ENCODE measurements at regions of chr3 and their contacts with region 1.

Region 1: GRCh38 chr3:39288300-39288808 is 8.5 kb upstream of the CX3CR1 start:
- DNase-seq: peak; percentile 90
- H3K4me3 Mint-ChIP-seq: no peak overlapping the region
- H3K27ac Mint-ChIP-seq: peak overlapping the region; percentile 22
- H3K4me1 Mint-ChIP-seq: peaks cover 61% of the 10 kb centered on the region
- H3K27me3 Mint-ChIP-seq: no peaks in the 10 kb centered on the region

Region 2: DNA sequence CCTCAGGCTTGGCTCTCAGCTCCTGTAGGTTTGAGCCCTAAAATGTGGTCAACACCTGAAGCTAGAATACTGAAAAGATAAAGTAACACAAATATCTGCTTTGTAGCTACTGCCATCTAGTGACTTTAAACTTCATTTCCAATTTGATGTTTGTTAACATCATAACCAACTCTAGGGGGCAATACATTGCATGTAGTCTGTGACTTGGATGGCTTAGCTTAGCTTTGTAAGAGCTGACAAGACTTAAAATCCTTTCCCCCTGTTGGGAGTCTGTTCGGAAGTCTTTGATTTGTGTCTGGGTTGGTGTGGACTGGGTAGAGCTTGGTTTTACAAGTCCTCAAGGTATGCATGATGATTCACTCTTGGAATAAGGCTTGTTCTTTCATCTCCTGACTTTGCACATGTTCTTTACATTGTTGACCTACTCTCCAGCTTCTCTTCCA is 288.3 kb before region 1 on chr3:
- CTCF ChIA-PET with region 1: interaction called, 19 read pairs
- POLR2A ChIA-PET with region 1: interaction called, 3 read pairs
- DNase-seq: no peak
- H3K4me3 Mint-ChIP-seq: no peak overlapping the region
- H3K27ac Mint-ChIP-seq: no peak overlapping the region
- H3K4me1 Mint-ChIP-seq: no peaks in the 10 kb centered on the region
- H3K27me3 Mint-ChIP-seq: peaks cover 13% of the 10 kb centered on the region

Region 3: DNA sequence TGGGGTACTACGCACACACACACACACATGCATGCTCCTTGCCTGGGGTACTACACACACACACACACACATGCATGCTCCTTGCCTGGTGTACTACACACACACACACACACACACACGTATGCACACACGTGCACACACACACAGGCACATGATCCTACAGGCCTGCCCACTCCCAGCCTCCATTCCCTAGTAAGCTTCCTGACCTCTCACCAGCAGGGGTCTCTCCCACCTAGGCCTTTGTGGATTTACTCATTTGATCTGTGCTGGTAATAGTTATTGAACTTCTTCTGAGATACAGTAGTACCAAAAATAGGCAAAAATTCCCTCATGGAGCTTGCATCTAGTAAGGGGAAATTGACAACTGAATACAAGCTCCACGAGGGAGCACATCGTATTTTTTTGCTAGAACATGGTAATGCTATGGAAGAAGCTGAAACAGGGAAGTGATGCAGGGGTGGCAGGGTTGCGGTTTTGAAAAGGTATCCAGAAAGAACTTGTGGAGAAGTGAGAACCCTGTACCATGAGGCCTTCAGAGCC is 161.8 kb before region 1 on chr3:
- CTCF ChIA-PET with region 1: interaction called, 96 read pairs
- POLR2A ChIA-PET with region 1: interaction called, 4 read pairs
- DNase-seq: no peak
- H3K4me3 Mint-ChIP-seq: no peak overlapping the region
- H3K27ac Mint-ChIP-seq: no peak overlapping the region
- H3K4me1 Mint-ChIP-seq: peaks cover 24% of the 10 kb centered on the region
- H3K27me3 Mint-ChIP-seq: no peaks in the 10 kb centered on the region

Region 4: DNA sequence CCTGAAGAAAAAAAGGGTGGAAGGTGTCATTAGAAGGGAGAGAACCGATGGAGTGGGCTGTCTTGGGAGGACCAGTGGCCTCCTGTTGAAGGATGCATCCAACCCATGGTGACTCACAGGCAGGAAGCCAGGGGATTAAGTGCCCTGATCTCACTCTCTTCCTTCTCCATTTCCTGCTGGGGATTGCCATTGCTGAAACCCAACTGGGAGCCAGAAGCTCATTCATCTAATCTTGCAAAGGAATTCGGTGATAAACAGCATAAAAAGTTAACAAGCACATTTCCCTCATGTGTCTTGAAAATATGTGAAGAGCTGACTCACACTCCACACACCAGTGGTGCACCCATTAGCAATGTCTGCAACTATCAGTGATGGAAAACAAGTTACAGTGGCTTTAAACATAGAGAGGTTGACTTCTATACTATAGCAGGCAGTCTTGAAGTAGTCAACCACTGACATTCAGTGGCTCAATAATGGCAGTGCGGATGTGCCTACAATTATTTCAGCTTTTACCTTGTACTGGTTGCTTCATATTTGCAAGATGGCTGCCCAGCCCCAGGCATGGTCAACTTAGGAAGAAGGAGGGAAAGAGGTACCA is 122.1 kb before region 1 on chr3:
- CTCF ChIA-PET with region 1: interaction called, 13 read pairs
- POLR2A ChIA-PET with region 1: no interaction called
- DNase-seq: no peak
- H3K4me3 Mint-ChIP-seq: no peak overlapping the region
- H3K27ac Mint-ChIP-seq: no peak overlapping the region
- H3K4me1 Mint-ChIP-seq: peaks cover 14% of the 10 kb centered on the region
- H3K27me3 Mint-ChIP-seq: peaks cover 2% of the 10 kb centered on the region

Region 5: GRCh38 chr3:39208463-39209055 is 79.8 kb before region 1 on chr3:
- CTCF ChIA-PET with region 1: interaction called, 76 read pairs
- POLR2A ChIA-PET with region 1: no interaction called
- DNase-seq: peak; percentile 42
- H3K4me3 Mint-ChIP-seq: no peak overlapping the region
- H3K27ac Mint-ChIP-seq: no peak overlapping the region
- H3K4me1 Mint-ChIP-seq: peaks cover 30% of the 10 kb centered on the region
- H3K27me3 Mint-ChIP-seq: peaks cover 18% of the 10 kb centered on the region

Region 6: GRCh38 chr3:39260957-39261356 is 27.4 kb before region 1 on chr3:
- CTCF ChIA-PET with region 1: interaction called, 31 read pairs
- POLR2A ChIA-PET with region 1: interaction called, 3 read pairs
- DNase-seq: peak; percentile 80
- H3K4me3 Mint-ChIP-seq: peak overlapping the region; percentile 25
- H3K27ac Mint-ChIP-seq: peak overlapping the region; percentile 64
- H3K4me1 Mint-ChIP-seq: peaks cover 64% of the 10 kb centered on the region
- H3K27me3 Mint-ChIP-seq: peaks cover 36% of the 10 kb centered on the region

Region 7: DNA sequence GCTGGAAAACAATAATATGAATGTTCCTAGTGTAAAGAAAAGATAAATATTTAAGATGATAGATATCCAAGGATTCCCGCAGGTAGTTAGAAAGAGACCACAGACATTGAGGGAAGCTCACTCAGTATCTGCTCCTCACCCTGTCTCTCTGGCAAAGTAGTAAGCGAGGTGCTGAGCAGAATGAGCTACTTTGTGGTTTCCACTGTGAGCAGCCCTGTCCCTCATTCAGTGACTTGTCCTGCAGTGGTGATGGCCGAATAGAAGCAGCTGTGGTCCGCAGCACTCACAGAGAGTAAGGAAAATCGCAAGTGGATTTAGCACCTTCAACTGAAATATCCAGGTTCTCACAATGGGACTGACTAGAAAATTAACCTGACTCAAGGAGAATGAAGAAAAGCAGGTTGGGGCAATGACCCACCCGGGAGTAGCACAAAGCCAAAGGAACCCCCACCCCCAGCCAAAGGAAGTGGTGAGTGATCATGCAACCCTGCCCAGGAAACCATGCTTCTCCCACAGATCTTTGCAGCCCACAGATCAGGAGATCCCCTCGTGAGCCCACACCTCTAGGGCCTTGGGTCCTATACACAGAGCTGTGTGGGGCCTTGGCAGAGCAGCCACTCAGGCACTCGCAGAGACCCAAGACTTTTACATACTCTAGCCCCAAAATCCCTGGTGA is 73.0 kb after region 1 on chr3:
- CTCF ChIA-PET with region 1: interaction called, 18 read pairs
- POLR2A ChIA-PET with region 1: interaction called, 8 read pairs
- DNase-seq: peak; percentile 80
- H3K4me3 Mint-ChIP-seq: peak overlapping the region; percentile 51
- H3K27ac Mint-ChIP-seq: peak overlapping the region; percentile 81
- H3K4me1 Mint-ChIP-seq: peaks cover 68% of the 10 kb centered on the region
- H3K27me3 Mint-ChIP-seq: peaks cover 5% of the 10 kb centered on the region

Measured in activated CD4-positive, alpha-beta memory T cell treated with anti-CD3 and anti-CD28 coated beads, Interleukin-2, amount 10 ng/mL, durations not matched to agents 7 days and 5 days (primary cell).